MCF 10A (cell line): ENCODE measurements at regions of chr2 and their contacts with region 1.

Region 1: DNA sequence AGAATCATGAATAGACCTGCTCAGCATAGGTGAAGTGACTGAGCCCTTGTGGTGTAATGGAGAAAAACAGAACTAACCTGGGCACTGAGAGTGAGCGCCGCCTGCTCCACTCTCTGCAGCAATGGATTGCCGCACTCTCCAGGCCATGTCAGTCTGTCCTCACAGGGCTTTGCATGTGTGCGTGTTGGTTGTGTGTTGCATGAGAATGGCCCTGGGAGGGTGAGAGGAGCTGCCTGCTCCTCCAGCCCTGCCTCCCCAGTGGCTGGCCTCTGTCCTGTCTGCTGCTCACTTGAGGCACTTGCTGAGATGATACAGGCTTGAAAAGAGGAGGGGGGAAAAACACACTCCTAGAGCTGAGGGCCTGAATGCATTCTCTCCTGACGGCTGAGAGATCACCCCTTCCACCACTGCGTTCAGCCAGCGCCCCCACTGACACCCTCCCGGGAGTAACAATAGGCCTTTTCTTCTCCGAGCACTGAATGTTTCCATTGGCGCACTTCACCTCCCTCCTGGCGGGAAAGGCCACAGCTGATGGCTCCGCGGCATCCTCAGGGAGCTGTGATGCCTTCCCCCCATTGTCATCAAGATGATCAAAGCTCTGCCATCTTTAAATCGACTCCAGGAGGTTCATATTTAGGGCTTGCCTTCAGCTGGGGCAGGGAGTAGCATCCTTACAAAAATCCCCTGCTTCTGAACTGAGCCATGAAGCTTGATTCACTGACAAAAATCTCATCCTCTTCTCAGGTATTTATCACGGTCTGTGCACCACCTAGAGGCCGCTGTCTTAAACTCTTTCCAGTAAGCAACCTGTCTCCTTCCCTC is 49.9 kb upstream of the DAPL1 start:
- DNase-seq: peak; percentile 62
- H3K4me3 Mint-ChIP-seq: no peak overlapping the region
- H3K27ac Mint-ChIP-seq: no peak overlapping the region
- H3K4me1 Mint-ChIP-seq: peaks cover 6% of the 10 kb centered on the region
- H3K27me3 Mint-ChIP-seq: peaks cover 38% of the 10 kb centered on the region
- CTCF ChIP-seq: peak; percentile 61

Region 2: GRCh38 chr2:158034199-158034866 is 710.9 kb before region 1 on chr2:
- CTCF ChIA-PET with region 1: interaction called, 435 read pairs
- POLR2A ChIA-PET with region 1: no interaction called
- intact Hi-C with region 1: loop called (anchors 1 kb)
- DNase-seq: peak; percentile 68
- H3K4me3 Mint-ChIP-seq: no peak overlapping the region
- H3K27ac Mint-ChIP-seq: no peak overlapping the region
- H3K4me1 Mint-ChIP-seq: no peaks in the 10 kb centered on the region
- H3K27me3 Mint-ChIP-seq: peaks cover 16% of the 10 kb centered on the region
- CTCF ChIP-seq: peak; percentile 55

Region 3: DNA sequence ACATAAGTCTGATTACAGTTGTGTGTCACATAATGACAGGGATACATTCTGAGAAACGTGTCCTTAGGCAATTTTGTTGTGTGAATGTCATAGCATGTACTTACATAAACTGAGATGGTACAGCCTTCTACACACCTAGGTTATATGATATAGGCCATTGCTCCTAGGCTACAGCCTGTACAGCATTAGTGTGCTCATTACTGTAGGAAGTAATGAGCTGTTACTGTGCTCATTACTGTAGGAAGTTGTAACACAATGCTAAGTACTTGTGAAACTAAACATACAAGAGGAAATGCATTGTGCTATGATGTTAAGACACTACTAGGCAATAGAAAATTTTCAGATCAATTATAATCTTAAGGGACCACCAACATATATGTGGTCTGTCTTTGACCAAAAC is 570.8 kb before region 1 on chr2:
- CTCF ChIA-PET with region 1: interaction called, 49 read pairs
- POLR2A ChIA-PET with region 1: no interaction called
- intact Hi-C with region 1: loop called (anchors 1 kb)
- DNase-seq: no peak
- H3K4me3 Mint-ChIP-seq: no peak overlapping the region
- H3K27ac Mint-ChIP-seq: no peak overlapping the region
- H3K4me1 Mint-ChIP-seq: no peaks in the 10 kb centered on the region
- H3K27me3 Mint-ChIP-seq: peaks cover 22% of the 10 kb centered on the region
- CTCF ChIP-seq: no peak

Region 4: DNA sequence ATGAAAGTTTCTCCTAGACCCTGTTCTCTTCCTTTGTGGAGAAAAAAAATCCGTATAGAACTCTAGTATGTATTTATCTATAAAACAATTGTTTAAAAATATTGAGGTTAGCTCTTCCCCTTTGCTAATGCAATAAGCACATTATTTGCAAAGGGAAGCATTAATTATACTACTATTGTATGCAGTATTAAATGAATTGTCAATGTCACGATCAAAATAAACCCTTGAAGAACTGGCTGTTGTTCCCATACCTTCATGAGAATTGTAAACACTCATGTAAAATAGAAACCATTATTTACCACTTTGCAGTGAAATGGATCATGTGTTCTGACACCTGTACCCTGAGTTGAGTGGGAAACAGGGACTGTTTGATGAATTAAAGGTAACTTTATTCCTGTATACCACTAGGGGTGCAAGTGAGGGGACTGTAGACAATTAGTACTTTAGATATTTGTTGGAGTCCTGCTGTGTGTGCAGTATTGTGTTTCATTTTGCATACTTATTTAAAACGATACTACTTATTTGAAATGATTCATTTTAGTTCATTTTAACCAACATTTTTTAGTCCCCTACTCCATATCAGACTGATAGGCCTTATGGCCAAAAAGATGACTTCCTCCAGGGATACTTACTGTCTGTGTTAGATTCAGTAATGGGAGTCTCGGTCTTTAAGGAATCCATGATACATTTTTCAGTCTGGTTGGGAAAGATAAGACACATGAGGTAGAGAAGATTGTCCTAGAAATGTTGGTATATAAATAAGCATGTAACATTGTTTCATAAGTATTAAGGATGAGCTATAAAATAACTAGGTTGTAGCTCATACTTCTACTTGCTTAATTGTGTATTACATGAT is 280.6 kb before region 1 on chr2:
- CTCF ChIA-PET with region 1: interaction called, 45 read pairs
- POLR2A ChIA-PET with region 1: no interaction called
- intact Hi-C with region 1: loop called (anchors 1 kb)
- DNase-seq: peak; percentile 32
- H3K4me3 Mint-ChIP-seq: no peak overlapping the region
- H3K27ac Mint-ChIP-seq: no peak overlapping the region
- H3K4me1 Mint-ChIP-seq: peaks cover 19% of the 10 kb centered on the region
- H3K27me3 Mint-ChIP-seq: no peaks in the 10 kb centered on the region
- CTCF ChIP-seq: peak; percentile 54

Region 5: DNA sequence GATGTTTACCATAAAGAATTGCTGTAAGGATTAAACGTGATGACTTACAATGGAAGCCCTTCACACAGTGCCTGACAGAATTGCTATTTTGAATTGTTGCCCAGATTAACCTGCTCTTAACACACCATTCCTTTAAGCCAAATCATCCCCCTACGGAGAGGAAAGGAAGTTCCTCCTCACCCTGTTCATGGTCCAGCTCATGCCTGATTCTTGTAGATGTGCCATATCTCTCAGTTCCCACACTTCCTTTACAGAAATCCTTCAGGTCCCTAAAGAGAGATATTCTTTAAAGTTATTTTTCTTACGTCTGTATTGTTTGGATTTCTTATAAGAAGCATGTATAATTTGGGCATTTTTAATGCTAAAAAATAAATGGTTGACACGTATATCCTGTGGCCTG is 77.7 kb before region 1 on chr2:
- CTCF ChIA-PET with region 1: interaction called, 20 read pairs
- POLR2A ChIA-PET with region 1: no interaction called
- intact Hi-C with region 1: no loop called
- DNase-seq: no peak
- H3K4me3 Mint-ChIP-seq: no peak overlapping the region
- H3K27ac Mint-ChIP-seq: no peak overlapping the region
- H3K4me1 Mint-ChIP-seq: no peaks in the 10 kb centered on the region
- H3K27me3 Mint-ChIP-seq: no peaks in the 10 kb centered on the region
- CTCF ChIP-seq: no peak

Region 6: DNA sequence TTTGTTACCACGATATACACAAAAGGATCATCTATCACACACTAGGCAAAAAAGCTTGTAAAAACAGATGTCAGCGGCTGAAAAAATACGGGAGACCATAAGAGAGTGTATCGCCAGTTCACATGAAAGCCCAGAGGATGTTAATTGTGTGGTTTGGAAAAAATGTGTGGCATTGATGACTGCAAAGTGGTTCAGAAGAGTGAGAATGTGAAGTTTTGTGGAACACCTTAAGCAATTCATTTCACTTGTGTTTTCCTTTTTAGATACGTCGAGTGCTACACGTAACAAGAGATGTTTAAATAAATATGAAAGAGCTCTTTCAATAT is 11.9 kb before region 1 on chr2:
- CTCF ChIA-PET with region 1: interaction called, 45 read pairs
- POLR2A ChIA-PET with region 1: no interaction called
- intact Hi-C with region 1: no loop called
- DNase-seq: no peak
- H3K4me3 Mint-ChIP-seq: no peak overlapping the region
- H3K27ac Mint-ChIP-seq: no peak overlapping the region
- H3K4me1 Mint-ChIP-seq: peaks cover 12% of the 10 kb centered on the region
- H3K27me3 Mint-ChIP-seq: peaks cover 13% of the 10 kb centered on the region
- CTCF ChIP-seq: no peak

Region 7: GRCh38 chr2:158779621-158780020 is 34.4 kb after region 1 on chr2:
- CTCF ChIA-PET with region 1: no interaction called
- POLR2A ChIA-PET with region 1: no interaction called
- intact Hi-C with region 1: no loop called
- DNase-seq: no peak
- H3K4me3 Mint-ChIP-seq: no peak overlapping the region
- H3K27ac Mint-ChIP-seq: no peak overlapping the region
- H3K4me1 Mint-ChIP-seq: peaks cover 15% of the 10 kb centered on the region
- H3K27me3 Mint-ChIP-seq: no peaks in the 10 kb centered on the region
- CTCF ChIP-seq: no peak